Thyroid gland (tissue), 4 donors: ENCODE measurements at regions of chr10 and their contacts with region 1.

Region 1: DNA sequence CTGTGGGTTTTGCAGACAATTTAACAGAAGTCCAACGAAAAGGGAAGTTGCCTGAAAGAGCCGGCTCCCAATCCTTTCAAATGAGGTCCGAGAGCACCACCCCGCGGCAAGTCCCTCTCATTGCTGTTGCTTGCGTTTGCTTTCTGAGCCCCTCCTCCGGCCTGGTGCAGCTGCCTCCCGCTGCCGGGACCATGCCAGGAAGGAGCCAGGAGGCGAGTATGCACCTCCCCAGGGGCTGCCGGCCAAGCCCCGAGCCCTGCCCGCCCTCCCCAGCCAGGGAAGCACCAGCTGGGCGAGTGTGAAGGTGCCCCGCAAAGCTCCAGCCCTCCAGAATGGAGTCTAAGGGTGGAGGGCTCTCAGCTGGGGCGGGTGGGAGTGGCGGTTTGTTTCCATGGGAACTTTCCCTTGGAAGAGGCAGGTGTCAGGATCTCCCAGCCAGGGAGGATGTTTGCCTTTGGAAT is 25.8 kb upstream of the PPP2R2D start:
- DNase-seq: peak; percentile 76 to 81
- H3K4me3 ChIP-seq: no peak overlapping the region
- H3K27ac ChIP-seq: no peak overlapping the region
- H3K4me1 ChIP-seq: peaks cover 0 to 7% of the 10 kb centered on the region in 2 donors
- H3K27me3 ChIP-seq: no peaks in the 10 kb centered on the region
- CTCF ChIP-seq: peak in 5 of 6 experiments; percentile 24 to 69 (median 61)
- POLR2A ChIP-seq: no peak

Region 2: DNA sequence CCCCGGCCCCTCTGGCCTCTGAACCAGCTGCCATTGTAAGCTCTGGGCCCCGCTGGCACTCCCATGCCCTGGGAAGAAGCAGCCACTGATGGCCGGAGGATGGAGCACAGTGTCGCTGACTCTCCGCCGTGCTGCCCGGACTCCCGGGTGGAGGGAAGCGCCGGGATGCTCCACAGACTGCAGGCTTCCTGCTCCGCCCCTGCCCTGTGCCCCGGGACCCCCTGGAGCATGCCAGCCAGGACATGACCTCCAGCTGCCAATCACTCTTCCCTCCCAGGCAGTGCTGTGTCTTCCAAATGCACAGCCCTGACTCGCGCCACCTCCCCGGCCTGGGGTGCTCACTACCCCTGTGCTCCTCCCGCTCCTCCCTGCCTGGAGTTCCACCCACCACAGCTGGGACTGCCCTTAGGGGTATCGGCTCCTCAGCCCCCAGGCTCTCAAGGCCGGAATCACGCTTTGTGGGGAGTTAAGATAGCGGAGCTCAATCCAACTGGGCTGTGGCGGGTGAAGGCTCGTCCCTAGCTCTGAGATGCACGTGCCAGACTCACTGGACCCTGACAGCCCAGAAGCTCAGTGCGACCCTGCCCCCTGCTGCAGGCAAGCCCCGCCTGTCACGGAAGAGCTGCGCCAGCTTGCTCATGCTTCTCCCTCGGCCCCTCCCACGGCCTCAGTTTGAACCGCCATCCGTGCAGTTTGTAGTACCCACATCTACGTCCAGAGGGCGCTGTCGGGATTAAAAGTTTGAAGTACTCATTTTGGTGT is 421.2 kb before region 1 on chr10:
- intact Hi-C with region 1: loop called (anchors 10 kb)
- DNase-seq: peak; percentile 71 to 77
- H3K4me3 ChIP-seq: no peak overlapping the region
- H3K27ac ChIP-seq: no peak overlapping the region
- H3K4me1 ChIP-seq: peaks cover 3 to 10% of the 10 kb centered on the region in 2 donors
- H3K27me3 ChIP-seq: no peaks in the 10 kb centered on the region
- CTCF ChIP-seq: peak; percentile 64 to 90 (median 70)
- POLR2A ChIP-seq: no peak